MCF 10A (cell line): ENCODE measurements at regions of chr10 and their contacts with region 1.

Region 1: DNA sequence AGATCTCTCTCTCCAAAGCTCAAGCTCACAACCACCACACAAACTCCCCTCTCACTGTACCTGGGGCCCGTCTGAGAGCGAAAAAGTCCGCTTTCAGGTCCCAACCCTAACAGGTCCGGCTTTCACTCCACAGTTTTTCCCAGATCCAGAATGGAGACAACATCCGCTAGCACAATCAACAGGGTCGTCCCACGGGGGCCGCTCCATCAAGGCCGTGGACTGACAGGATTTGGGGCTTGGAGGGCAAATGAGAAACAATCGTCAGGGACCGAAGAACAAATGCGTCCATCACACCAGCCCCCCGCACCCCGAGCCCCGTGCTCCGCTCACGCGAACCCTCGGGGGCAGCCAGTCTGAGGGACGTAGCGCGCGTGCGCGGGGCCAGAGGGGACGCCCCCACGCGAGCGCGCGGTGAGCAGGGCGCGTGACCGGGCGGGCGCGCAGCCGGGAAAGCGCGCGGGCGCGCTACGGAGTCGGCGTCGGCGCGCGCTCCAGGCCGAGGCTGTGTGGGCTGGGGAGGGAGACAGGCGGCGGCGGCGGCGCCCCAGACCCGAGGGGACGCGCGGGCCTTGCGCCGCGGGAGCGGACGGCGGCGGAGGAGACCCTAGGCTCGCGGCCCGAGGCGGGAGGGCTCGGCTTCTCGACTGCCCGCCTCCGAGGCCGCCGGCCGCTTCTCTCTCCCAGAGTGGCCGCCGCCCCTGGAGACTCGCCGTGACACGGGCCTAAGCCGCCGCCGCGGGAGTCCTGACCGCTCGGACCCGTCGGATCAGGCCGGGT is at the start of gene SLK:
- DNase-seq: peak; percentile 75
- H3K4me3 Mint-ChIP-seq: peak within 1 kb of the TSS; percentile 89
- H3K27ac Mint-ChIP-seq: peak within 1 kb of the TSS; percentile 96
- H3K4me1 Mint-ChIP-seq: no peaks in the 10 kb centered on the region
- H3K27me3 Mint-ChIP-seq: no peaks in the 10 kb centered on the region
- CTCF ChIP-seq: no peak
- total RNA-seq, gene SLK: 57.3 and 71.9 TPM in 2 replicates

Region 2: GRCh38 chr10:103448746-103449145 is 518.1 kb before region 1 on chr10:
- CTCF ChIA-PET with region 1: no interaction called
- POLR2A ChIA-PET with region 1: no interaction called
- intact Hi-C with region 1: no loop called
- DNase-seq: peak; percentile 75
- H3K4me3 Mint-ChIP-seq: no peak overlapping the region
- H3K27ac Mint-ChIP-seq: peak overlapping the region; percentile 5
- H3K4me1 Mint-ChIP-seq: peaks cover 25% of the 10 kb centered on the region
- H3K27me3 Mint-ChIP-seq: no peaks in the 10 kb centered on the region
- CTCF ChIP-seq: no peak

Region 3: DNA sequence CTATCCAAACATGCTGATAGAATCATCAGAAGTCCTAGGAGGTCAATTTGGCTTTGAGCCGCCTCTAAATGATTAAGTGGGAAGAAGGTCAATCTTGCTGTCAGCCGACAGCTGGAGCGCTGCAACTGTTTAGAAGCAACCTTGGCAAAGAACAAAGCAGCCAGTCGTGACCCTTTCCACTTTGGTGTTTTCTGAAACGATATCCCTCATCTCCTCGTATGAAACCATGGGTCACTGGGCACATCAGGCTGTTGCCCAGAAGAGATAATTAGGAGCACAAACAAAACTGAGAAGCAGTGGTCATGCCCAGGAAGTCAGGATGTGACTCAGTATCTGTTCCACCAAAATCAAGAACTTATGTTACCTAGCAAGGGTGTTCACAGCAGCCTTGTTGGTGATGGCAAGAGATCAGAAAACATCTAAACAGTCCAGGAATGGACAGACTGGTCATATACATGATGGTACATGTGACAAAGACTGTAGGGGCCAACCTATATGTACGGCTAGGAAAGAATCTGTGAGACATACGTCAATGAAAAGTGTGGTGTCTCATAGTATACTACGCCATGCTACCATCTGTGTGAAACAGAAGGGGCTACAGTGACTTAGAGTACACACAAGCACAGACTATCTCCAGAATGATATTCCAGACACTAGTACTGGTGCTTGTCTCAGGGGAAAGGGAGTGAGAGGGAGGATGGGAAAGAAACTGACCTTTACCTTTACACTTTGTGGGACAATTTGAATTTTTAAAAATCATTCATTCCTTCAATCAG is 71.3 kb before region 1 on chr10:
- CTCF ChIA-PET with region 1: interaction called, 8 read pairs
- POLR2A ChIA-PET with region 1: interaction called, 99 read pairs
- intact Hi-C with region 1: no loop called
- DNase-seq: peak; percentile 60
- H3K4me3 Mint-ChIP-seq: no peak overlapping the region
- H3K27ac Mint-ChIP-seq: peak overlapping the region; percentile 91
- H3K4me1 Mint-ChIP-seq: peaks cover 39% of the 10 kb centered on the region
- H3K27me3 Mint-ChIP-seq: no peaks in the 10 kb centered on the region
- CTCF ChIP-seq: no peak

Region 4: DNA sequence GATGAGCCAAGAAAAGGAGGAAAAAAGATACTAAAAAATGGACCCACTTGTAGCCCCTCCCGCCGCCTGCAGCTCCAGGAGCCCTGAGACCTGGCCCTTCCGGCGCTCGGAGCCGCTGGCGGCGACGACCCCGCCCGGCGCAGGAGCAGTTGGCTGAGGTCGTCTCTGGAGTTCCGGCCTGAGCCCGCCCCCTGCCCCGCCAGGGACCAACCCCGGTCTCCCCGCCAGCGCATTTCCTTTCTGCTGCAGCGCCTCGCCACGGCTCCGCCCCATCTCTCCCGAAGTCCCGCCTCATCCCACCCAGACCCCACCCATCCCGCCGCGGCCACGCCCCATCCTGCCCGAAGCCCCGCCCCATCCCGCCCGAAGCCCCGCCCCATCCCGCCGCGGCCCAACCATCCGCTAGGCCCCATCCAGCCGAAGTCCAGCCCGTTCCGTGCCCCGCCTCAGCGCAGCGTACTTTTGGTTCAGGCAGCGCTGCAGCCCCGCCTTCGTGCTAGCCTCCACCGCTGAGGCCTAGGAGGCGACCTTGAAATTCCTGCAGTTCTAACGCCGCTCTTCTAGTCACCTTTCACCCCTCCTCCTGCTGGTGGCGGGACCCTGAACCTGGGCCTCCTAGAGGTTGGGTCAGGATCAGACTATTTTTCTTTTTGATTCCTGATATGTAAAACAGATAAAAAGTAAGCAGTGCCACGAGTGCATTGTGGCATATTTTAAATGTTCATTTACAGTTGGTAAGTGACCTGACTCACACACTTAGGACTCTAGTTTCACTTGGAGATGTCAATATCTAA is 48.6 kb before region 1 on chr10 and contains the start of gene STN1:
- CTCF ChIA-PET with region 1: interaction called, 6 read pairs
- POLR2A ChIA-PET with region 1: interaction called, 158 read pairs
- intact Hi-C with region 1: loop called (anchors 2 kb)
- DNase-seq: peak; percentile 94
- H3K4me3 Mint-ChIP-seq: peak within 1 kb of the TSS; percentile 89
- H3K27ac Mint-ChIP-seq: peak within 1 kb of the TSS; percentile 71
- H3K4me1 Mint-ChIP-seq: no peaks in the 10 kb centered on the region
- H3K27me3 Mint-ChIP-seq: no peaks in the 10 kb centered on the region
- CTCF ChIP-seq: no peak
- total RNA-seq, gene STN1: 31.8 and 46.7 TPM in 2 replicates

Region 5: DNA sequence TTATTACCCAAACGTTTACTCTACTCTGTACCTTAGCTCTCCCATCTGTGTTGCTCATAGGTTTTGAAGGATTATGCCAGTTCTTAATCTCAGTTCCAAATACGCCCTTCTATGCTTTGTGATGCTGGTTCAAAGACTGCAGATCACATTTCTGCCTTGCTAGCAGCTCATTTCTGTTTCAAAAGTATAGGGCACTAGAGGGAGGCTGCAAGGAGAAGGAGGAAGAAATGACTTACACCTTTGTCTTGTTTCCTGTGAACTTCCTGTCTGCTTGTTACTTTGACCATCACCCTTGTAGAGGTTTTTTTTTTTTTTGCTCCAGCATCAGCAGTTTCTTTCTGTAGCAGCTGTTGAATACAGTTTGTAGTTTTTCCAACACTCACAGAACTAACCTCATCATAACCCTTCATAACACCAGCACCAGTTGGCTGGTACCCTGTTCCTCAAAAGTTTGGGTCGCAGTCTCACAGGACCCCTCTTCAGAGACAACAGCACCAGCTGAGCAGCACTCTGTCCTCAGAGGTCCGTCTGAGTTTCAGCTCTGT is 16.6 kb after region 1 on chr10:
- CTCF ChIA-PET with region 1: interaction called, 3 read pairs
- POLR2A ChIA-PET with region 1: interaction called, 18 read pairs
- intact Hi-C with region 1: no loop called
- DNase-seq: no peak
- H3K4me3 Mint-ChIP-seq: no peak overlapping the region
- H3K27ac Mint-ChIP-seq: no peak overlapping the region
- H3K4me1 Mint-ChIP-seq: peaks cover 32% of the 10 kb centered on the region
- H3K27me3 Mint-ChIP-seq: no peaks in the 10 kb centered on the region
- CTCF ChIP-seq: no peak

Region 6: GRCh38 chr10:104146882-104147281 is 180.0 kb after region 1 on chr10:
- CTCF ChIA-PET with region 1: no interaction called
- POLR2A ChIA-PET with region 1: no interaction called
- intact Hi-C with region 1: no loop called
- DNase-seq: no peak
- H3K4me3 Mint-ChIP-seq: no peak overlapping the region
- H3K27ac Mint-ChIP-seq: no peak overlapping the region
- H3K4me1 Mint-ChIP-seq: no peaks in the 10 kb centered on the region
- H3K27me3 Mint-ChIP-seq: peaks cover 35% of the 10 kb centered on the region
- CTCF ChIP-seq: no peak